Naive thymus-derived CD4-positive, alpha-beta T cell (primary cell): ENCODE measurements at regions of chr17 and their contacts with region 1.

Region 1: GRCh38 chr17:8156246-8156992 is 4.2 kb upstream of the PER1 start:
- DNase-seq: peak; percentile 96 to 100 (median 100)
- ATAC-seq: peak; percentile 83
- H3K4me3 ChIP-seq: peak overlapping the region; percentile 93
- H3K4me3 Mint-ChIP-seq: no peak overlapping the region
- H3K27ac ChIP-seq: peak overlapping the region; percentile 97
- H3K27ac Mint-ChIP-seq: no peak overlapping the region
- H3K4me1 ChIP-seq: peaks cover 58 to 75% of the 10 kb centered on the region in 2 donors
- H3K4me1 Mint-ChIP-seq: peaks cover 33 to 73% (median 65%) of the 10 kb centered on the region in 7 donors
- H3K27me3 ChIP-seq: no peaks in the 10 kb centered on the region
- H3K27me3 Mint-ChIP-seq: no peaks in the 10 kb centered on the region

Region 2: DNA sequence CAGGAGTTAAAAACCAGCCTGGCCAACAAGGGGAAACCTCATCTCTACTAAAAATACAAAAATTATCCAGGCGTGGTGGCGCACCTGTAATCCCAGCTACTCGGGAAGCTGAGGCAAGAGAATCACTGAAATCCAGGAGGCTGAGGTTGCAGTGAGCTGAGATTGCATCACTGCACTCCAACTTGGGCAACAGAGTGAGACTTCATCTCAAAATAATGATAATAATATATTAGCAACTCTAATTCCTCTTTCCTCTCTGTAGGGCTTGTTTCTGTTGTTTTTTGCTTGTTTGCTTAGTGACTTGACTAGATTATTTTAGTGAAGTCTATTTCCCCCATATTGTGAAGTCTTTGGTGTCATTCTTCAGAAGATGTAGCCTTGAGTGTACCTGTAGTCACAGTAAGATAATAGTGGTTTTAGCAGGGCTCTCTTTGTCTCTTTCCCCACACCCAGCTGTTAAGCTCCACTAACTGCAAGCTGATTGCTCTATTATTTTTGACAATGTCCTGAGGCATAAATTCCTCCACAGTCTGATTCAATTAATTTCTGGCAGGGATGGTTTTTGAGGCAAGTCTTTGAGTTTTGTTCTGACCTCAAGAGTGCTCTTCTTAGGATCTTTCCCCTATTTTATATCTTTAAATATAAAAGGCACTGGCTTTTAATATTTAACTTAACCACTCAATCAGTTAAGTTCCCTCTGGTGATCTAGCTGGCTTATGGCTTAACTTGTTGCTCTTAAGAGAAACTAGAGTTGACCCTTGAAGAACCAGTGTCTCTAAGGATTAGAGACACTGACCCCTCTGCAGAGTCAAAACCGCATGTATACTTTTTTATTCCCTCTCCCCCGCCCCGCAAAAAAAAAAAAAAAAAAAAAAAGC is 626.2 kb before region 1 on chr17:
- CTCF ChIA-PET with region 1: no interaction called
- POLR2A ChIA-PET with region 1: no interaction called
- intact Hi-C with region 1: no loop called
- DNase-seq: no peak
- ATAC-seq: no peak
- H3K4me3 ChIP-seq: no peak overlapping the region
- H3K4me3 Mint-ChIP-seq: no peak overlapping the region
- H3K27ac ChIP-seq: no peak overlapping the region
- H3K27ac Mint-ChIP-seq: no peak overlapping the region
- H3K4me1 ChIP-seq: no peaks in the 10 kb centered on the region
- H3K4me1 Mint-ChIP-seq: no peaks in the 10 kb centered on the region
- H3K27me3 ChIP-seq: no peaks in the 10 kb centered on the region
- H3K27me3 Mint-ChIP-seq: peaks cover 0 to 6% (median 0%) of the 10 kb centered on the region in 5 donors

Region 3: DNA sequence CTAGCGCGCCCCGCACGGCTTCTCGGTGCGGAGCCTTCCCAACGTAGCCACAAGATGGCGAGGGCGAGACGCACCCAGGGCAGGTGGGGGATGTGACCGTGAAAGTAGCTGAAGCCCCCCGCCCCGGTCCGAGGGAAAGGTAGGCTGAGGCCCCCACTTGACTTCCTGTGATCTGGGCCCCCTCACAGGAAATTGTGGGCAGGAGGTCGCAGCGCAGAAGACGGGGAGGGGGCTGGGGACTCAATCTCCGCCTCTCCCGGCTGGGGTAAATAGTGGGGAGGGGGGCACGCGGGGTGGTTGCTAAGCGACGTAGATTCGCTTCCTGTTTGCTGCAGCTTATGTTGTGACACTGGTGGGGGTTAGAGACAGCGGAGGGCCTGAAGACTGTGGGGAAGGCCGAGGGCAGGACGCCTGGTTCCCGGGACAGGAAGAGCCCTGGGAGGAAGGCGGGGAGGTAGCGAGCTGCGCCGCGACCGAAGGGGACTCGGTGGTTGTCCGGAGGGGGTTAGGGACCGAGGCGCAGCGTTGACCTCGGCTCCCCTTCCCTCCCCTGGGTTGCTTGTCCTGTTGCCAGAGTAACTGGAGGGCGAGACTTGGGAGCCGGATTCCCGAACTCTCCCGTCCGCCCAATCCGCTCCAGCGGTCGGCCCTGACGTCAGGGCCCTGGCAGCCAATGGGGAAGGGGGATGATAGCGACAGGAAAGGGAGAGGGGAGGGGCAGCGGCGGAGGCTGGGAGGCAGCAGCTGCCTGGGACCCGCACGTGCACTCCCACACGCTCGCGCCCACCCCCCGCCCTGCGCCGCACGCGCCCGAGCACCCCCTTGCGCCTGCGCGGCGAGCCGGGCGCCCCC is 321.2 kb before region 1 on chr17:
- CTCF ChIA-PET with region 1: no interaction called
- POLR2A ChIA-PET with region 1: interaction called, 3 read pairs
- intact Hi-C with region 1: loop called in 1 of 2 experiments (anchors 2 kb)
- DNase-seq: peak; percentile 76 to 97 (median 95)
- ATAC-seq: peak; percentile 70
- H3K4me3 ChIP-seq: peak overlapping the region; percentile 96
- H3K4me3 Mint-ChIP-seq: peak overlapping the region; percentile 91 to 99 (median 96)
- H3K27ac ChIP-seq: peak overlapping the region; percentile 96
- H3K27ac Mint-ChIP-seq: peak overlapping the region; percentile 95 to 100 (median 99)
- H3K4me1 ChIP-seq: peaks cover 29 to 38% of the 10 kb centered on the region in 2 donors
- H3K4me1 Mint-ChIP-seq: peaks cover 28 to 60% (median 44%) of the 10 kb centered on the region in 7 donors
- H3K27me3 ChIP-seq: no peaks in the 10 kb centered on the region
- H3K27me3 Mint-ChIP-seq: peaks cover 0 to 28% (median 0%) of the 10 kb centered on the region in 5 donors

Region 4: DNA sequence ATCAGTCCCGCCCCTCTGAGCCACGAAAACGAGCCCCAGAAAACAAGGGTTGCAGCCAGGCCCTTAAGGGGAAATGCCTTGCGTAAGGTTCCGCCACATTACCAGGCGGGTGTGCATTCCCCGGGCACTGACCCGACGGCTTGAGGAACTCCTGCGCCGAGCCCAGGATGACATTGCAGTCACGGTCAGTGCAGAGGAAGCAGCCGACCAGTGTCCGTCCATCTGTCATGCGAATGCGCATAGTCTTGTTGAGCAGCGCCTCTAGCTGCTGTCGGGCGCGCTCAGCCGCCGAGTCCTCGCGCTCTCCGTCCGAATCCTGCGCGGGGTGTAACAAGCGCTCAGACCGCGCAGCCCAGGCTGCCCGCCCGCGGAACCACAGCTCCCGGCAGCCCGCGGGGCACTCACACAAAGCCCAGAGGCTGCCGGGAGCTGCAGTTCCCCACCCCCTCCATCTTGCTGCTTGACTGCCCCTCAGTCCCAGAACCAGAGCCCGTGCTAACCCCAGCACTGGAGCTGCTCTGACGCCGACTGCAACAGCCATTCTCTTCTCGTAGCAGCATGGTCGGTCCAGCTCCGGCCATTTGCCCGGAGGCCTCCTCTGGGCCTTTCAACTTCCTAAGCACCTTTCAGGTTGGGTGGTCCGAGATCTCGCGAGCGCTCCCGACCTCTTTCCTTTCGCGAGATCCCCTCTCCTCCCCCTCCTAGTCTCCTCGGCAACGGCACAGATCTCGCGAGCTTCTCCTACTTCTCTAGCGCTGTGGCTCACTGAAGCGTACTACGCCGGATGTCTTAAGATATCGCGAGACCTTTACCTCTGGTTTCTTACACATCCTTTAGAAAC is 299.3 kb before region 1 on chr17 and contains the start of gene NAA38:
- CTCF ChIA-PET with region 1: no interaction called
- POLR2A ChIA-PET with region 1: no interaction called
- intact Hi-C with region 1: loop called in 1 of 2 experiments (anchors 5 kb)
- DNase-seq: peak; percentile 81 to 99 (median 97)
- ATAC-seq: peak; percentile 87
- H3K4me3 ChIP-seq: peak within 1 kb of the TSS; percentile 70
- H3K4me3 Mint-ChIP-seq: no peak within 1 kb of the TSS
- H3K27ac ChIP-seq: peak within 1 kb of the TSS; percentile 83
- H3K27ac Mint-ChIP-seq: no peak within 1 kb of the TSS
- H3K4me1 ChIP-seq: peaks cover 25 to 26% of the 10 kb centered on the region in 2 donors
- H3K4me1 Mint-ChIP-seq: peaks cover 0 to 16% (median 5%) of the 10 kb centered on the region in 7 donors
- H3K27me3 ChIP-seq: no peaks in the 10 kb centered on the region
- H3K27me3 Mint-ChIP-seq: no peaks in the 10 kb centered on the region
- total RNA-seq, gene NAA38: 22.1 to 63.8 (median 24.9) TPM

Region 5: GRCh38 chr17:8125157-8125946 is 31.1 kb before region 1 on chr17:
- CTCF ChIA-PET with region 1: interaction called, 24 read pairs
- POLR2A ChIA-PET with region 1: interaction called, 28 read pairs
- intact Hi-C with region 1: loop called (anchors 1 kb)
- DNase-seq: peak; percentile 82 to 97 (median 87)
- ATAC-seq: peak; percentile 63
- H3K4me3 ChIP-seq: peak overlapping the region; percentile 96
- H3K4me3 Mint-ChIP-seq: peak overlapping the region; percentile 88 to 99 (median 92)
- H3K27ac ChIP-seq: peak overlapping the region; percentile 50
- H3K27ac Mint-ChIP-seq: peak overlapping the region; percentile 80 to 99 (median 94)
- H3K4me1 ChIP-seq: peaks cover 46 to 50% of the 10 kb centered on the region in 2 donors
- H3K4me1 Mint-ChIP-seq: peaks cover 42 to 57% (median 51%) of the 10 kb centered on the region in 7 donors
- H3K27me3 ChIP-seq: peaks cover 0 to 3% of the 10 kb centered on the region in 2 donors
- H3K27me3 Mint-ChIP-seq: peaks cover 0 to 65% (median 27%) of the 10 kb centered on the region in 5 donors

Region 6: GRCh38 chr17:8144720-8145231 is 11.6 kb before region 1 on chr17:
- CTCF ChIA-PET with region 1: interaction called, 24 read pairs
- POLR2A ChIA-PET with region 1: interaction called, 136 read pairs
- intact Hi-C with region 1: loop called (anchors 1 kb)
- DNase-seq: peak in 1 of 9 donors; percentile 15
- ATAC-seq: no peak
- H3K4me3 ChIP-seq: no peak overlapping the region
- H3K4me3 Mint-ChIP-seq: peak overlapping the region in 1 of 10 donors; percentile 34
- H3K27ac ChIP-seq: no peak overlapping the region
- H3K27ac Mint-ChIP-seq: peak overlapping the region in 1 of 9 donors; percentile 76
- H3K4me1 ChIP-seq: peaks cover 0 to 5% of the 10 kb centered on the region in 2 donors
- H3K4me1 Mint-ChIP-seq: peaks cover 0 to 21% (median 4%) of the 10 kb centered on the region in 7 donors
- H3K27me3 ChIP-seq: no peaks in the 10 kb centered on the region
- H3K27me3 Mint-ChIP-seq: no peaks in the 10 kb centered on the region

Region 7: GRCh38 chr17:8189711-8190477 is 33.5 kb after region 1 on chr17 and contains the start of gene BORCS6:
- CTCF ChIA-PET with region 1: interaction called, 4 read pairs
- POLR2A ChIA-PET with region 1: interaction called, 820 read pairs
- intact Hi-C with region 1: loop called (anchors 1 kb)
- DNase-seq: peak; percentile 76 to 97 (median 94)
- ATAC-seq: peak; percentile 81
- H3K4me3 ChIP-seq: peak within 1 kb of the TSS; percentile 91
- H3K4me3 Mint-ChIP-seq: peak within 1 kb of the TSS in 2 of 10 donors; percentile 15 to 49
- H3K27ac ChIP-seq: peak within 1 kb of the TSS; percentile 87
- H3K27ac Mint-ChIP-seq: peak within 1 kb of the TSS in 7 of 9 donors; percentile 46 to 94 (median 88)
- H3K4me1 ChIP-seq: peaks cover 33 to 38% of the 10 kb centered on the region in 2 donors
- H3K4me1 Mint-ChIP-seq: peaks cover 8 to 13% (median 13%) of the 10 kb centered on the region in 7 donors
- H3K27me3 ChIP-seq: no peaks in the 10 kb centered on the region
- H3K27me3 Mint-ChIP-seq: no peaks in the 10 kb centered on the region
- total RNA-seq, gene BORCS6: 5.4 to 16.1 (median 13.4) TPM

Region 8: DNA sequence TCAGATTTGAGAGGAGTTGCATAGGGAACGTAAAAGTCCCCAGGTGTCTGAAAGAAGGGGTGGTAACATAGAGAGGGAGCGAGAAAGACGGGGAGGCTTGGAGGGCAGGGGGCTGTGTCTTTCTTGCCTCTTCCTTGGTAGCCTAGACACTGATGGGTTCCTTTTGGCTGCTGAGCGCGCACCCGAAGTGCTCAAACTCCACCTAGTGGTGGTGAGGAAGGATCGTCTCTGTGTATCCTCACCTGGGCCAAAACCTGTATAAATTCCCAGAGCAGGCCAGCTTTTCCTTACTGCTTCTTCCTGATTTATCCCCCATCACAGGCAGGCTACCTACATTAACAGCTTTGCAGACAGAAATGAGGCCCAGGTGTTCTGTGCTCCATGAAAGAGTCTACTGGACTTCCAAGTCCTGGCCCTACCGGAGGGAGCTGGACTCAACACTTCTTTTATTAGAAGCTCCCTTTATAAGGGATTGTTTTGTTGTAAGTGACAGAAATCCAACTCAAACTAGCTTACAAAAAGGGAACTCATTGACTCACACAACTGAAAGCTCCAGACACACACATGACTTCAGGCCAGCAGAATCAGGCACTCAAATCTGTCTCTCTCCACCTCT is 144.3 kb after region 1 on chr17:
- CTCF ChIA-PET with region 1: interaction called, 10 read pairs
- POLR2A ChIA-PET with region 1: interaction called, 16 read pairs
- intact Hi-C with region 1: loop called in 1 of 2 experiments (anchors 1 kb)
- DNase-seq: peak; percentile 33 to 80 (median 72)
- ATAC-seq: peak; percentile 95
- H3K4me3 ChIP-seq: no peak overlapping the region
- H3K4me3 Mint-ChIP-seq: peak overlapping the region in 1 of 10 donors; percentile 14
- H3K27ac ChIP-seq: no peak overlapping the region
- H3K27ac Mint-ChIP-seq: peak overlapping the region in 7 of 9 donors; percentile 6 to 80 (median 71)
- H3K4me1 ChIP-seq: peaks cover 3 to 9% of the 10 kb centered on the region in 2 donors
- H3K4me1 Mint-ChIP-seq: peaks cover 7 to 18% (median 14%) of the 10 kb centered on the region in 7 donors
- H3K27me3 ChIP-seq: no peaks in the 10 kb centered on the region
- H3K27me3 Mint-ChIP-seq: peaks cover 0 to 5% (median 0%) of the 10 kb centered on the region in 5 donors